WTC11 (cell line): ENCODE measurements at regions of chr19 and their contacts with region 1.

Region 1: GRCh38 chr19:43743022-43743421 is 11.7 kb downstream of the SMG9 start:
- DNase-seq: no peak
- ATAC-seq: no peak
- H3K4me3 Mint-ChIP-seq: no peak overlapping the region
- H3K27ac Mint-ChIP-seq: no peak overlapping the region
- H3K4me1 Mint-ChIP-seq: peaks cover 6% of the 10 kb centered on the region; the same call in 1 of the 2 replicates
- H3K27me3 Mint-ChIP-seq: no peaks in the 10 kb centered on the region
- CTCF ChIP-seq: no peak

Region 2: DNA sequence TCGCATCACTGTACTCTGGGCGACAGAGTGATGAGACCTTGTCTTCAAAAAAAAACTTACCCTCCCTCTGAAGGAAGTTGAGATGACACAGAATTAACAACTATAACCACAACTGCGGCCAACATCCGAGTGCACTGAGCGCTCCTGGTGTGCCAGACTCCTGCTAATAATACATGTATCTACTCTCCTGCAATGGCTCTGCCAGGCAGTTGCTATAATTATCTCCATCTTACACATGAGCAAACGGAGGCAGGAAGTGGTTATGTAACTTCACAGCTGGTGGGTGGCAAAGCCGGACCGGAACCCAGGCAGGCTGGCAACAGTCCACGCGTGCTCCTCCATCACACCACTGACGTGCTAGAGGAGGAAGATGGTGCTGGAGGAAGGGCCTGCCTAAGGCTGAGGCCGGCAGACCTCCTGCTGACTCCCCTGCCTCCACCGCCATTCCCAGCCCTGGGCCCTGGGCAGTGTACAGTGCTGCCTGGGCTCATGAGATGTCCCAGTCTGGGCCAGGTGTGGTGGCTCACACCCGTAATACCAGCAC is 180.3 kb before region 1 on chr19:
- CTCF ChIA-PET with region 1: no interaction called
- POLR2A ChIA-PET with region 1: no interaction called
- DNase-seq: no peak
- ATAC-seq: no peak
- H3K4me3 Mint-ChIP-seq: no peak overlapping the region
- H3K27ac Mint-ChIP-seq: no peak overlapping the region
- H3K4me1 Mint-ChIP-seq: no peaks in the 10 kb centered on the region
- H3K27me3 Mint-ChIP-seq: no peaks in the 10 kb centered on the region
- CTCF ChIP-seq: no peak

Region 3: DNA sequence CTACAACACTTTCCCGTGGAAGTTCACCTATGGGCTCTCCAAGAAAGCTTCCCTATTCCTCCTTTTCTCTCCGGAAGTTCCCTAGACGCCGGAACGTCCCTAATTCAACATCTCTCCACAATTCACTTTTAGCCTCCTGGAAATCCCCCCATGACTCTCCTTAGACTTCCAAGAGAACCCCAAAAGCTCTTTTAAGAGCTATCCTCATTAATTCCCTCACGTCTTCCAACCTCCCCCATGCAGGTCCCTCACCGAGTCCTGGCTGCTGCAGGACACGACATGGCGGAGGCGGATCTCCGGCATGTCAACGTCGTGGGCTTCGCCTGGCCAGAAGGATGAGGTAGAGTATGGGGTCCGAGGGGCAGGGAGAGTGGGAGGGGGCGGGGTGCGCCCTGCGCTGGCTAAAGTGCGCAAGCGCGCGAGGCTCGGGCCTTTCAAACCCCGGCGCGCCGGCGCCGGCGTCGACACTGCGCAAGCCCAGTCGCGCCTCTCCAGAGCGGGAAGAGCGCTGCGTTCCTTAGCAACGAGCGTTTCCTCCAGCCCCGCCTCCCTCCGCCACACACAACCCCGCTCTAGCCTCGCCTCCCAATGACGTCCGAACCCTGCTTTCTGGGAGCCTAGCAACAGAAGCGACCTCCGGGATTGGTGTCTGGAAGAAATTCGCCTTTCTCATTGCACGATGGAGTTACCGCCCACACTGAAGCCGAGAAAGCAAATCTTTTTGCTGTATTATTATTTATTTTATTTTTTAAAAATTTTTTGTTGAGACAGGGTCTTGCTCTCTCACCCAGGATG is 167.7 kb before region 1 on chr19 and contains the starts of genes PINLYP and XRCC1:
- CTCF ChIA-PET with region 1: no interaction called
- POLR2A ChIA-PET with region 1: no interaction called
- DNase-seq: peak; percentile 97
- ATAC-seq: peak; percentile 96
- H3K4me3 Mint-ChIP-seq: peak within 1 kb of the TSS; percentile 96
- H3K27ac Mint-ChIP-seq: peak within 1 kb of the TSS; percentile 91
- H3K4me1 Mint-ChIP-seq: peaks cover 33% of the 10 kb centered on the region
- H3K27me3 Mint-ChIP-seq: no peaks in the 10 kb centered on the region; the same call in none of the 2 replicates
- CTCF ChIP-seq: no peak
- total RNA-seq, gene PINLYP: 6.4 to 11.3 TPM (median 10.6 TPM) in 3 replicates
- total RNA-seq, gene XRCC1: 46.5 to 50.8 TPM (median 48.3 TPM) in 3 replicates

Region 4: GRCh38 chr19:43754503-43755255 is 11.7 kb after region 1 on chr19 and contains the start of gene SMG9:
- CTCF ChIA-PET with region 1: interaction called, 30 read pairs
- POLR2A ChIA-PET with region 1: interaction called, 3 read pairs
- DNase-seq: peak; percentile 97
- ATAC-seq: peak; percentile 87
- H3K4me3 Mint-ChIP-seq: peak within 1 kb of the TSS; percentile 96
- H3K27ac Mint-ChIP-seq: peak within 1 kb of the TSS; percentile 99
- H3K4me1 Mint-ChIP-seq: peaks cover 30% of the 10 kb centered on the region
- H3K27me3 Mint-ChIP-seq: no peaks in the 10 kb centered on the region
- CTCF ChIP-seq: no peak
- total RNA-seq, gene SMG9: 25.7 to 39.6 TPM (median 34.3 TPM) in 3 replicates

Region 5: DNA sequence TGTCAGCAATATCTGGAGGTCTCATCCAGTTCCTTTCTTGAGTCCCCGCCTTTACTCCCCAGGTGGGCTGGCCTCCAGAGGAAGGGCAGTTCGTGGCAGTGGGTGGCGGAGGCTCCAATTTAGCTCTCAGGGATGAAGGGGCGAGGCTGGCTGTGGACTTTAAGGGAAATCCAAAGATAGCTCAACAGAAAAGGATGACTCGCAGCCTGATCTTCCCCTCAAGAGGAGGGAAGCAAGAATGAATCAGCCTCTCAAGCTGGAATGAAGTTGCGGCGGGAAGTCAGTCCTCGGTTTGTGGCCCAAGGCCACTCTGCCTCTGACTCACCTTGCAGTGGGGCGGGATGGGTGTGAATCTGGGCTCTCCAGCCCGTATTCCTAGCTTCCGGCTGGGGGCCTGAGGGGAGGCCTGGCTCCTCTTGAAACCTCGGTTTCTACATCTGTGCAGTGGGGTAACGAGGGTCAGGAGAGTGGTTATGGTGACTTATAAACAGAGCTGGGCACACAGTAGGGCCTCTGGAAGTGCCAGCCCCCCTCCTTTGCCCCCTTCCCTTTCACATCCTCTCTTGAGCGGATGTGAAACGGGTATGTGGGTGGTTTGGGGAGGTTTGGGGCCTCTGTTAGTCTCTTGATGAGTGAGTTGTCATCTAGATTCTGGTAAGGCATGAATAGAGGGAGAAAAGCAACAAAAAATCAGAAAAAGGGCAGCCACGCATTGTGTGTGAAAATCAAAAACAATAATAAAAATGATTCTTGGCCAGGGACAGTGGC is 22.3 kb after region 1 on chr19:
- CTCF ChIA-PET with region 1: interaction called, 31 read pairs
- POLR2A ChIA-PET with region 1: no interaction called
- DNase-seq: no peak
- ATAC-seq: no peak
- H3K4me3 Mint-ChIP-seq: no peak overlapping the region
- H3K27ac Mint-ChIP-seq: no peak overlapping the region
- H3K4me1 Mint-ChIP-seq: peaks cover 9% of the 10 kb centered on the region
- H3K27me3 Mint-ChIP-seq: peaks cover 11% of the 10 kb centered on the region
- CTCF ChIP-seq: no peak

Region 6: DNA sequence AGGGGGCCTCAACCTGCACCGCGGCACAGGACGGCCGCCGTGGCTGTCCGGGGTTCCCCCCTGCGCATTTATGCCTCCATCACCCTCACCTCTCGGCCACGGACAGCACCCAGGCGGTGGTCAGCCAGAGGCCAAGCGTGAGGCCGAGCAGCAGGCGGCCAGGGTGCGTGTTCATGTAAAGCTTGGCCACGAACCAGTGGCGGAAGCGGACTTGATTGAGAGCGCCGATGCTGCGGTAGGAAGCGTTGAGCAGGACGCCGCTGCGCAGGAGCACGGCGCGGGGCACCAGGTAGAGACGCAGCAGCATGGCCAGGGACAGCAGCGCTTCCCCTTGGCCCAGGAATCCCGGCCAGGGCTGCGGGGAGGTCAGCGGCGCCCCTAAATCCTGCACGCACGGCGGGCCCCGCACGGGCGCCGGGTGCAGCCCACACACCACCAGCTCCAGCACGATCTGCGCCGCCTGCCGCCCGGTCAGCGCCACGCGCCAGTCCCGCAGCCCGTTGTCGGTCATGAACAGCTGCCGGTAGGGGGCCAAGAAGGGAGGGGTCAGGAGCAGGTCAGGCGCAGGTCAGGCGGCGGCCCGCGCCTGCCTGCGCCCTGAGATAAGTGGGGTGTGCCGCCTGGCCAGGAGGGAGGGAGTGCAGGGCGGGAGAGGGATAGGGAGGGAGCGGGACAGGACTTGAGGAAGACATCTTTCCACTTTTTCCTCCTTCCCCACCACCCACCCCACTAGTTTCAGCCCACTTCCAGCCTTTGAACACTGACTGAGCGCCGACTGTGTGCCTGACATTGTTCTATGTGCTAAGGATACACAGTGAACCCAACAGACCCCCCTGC is 31.3 kb after region 1 on chr19:
- CTCF ChIA-PET with region 1: interaction called, 19 read pairs
- POLR2A ChIA-PET with region 1: interaction called, 5 read pairs
- DNase-seq: peak; percentile 92
- ATAC-seq: peak; percentile 83
- H3K4me3 Mint-ChIP-seq: peak overlapping the region; percentile 72
- H3K27ac Mint-ChIP-seq: no peak overlapping the region
- H3K4me1 Mint-ChIP-seq: peaks cover 39% of the 10 kb centered on the region
- H3K27me3 Mint-ChIP-seq: peaks cover 75% of the 10 kb centered on the region
- CTCF ChIP-seq: peak; percentile 44

Region 7: GRCh38 chr19:43784981-43785808 is 42.2 kb after region 1 on chr19:
- CTCF ChIA-PET with region 1: interaction called, 24 read pairs
- POLR2A ChIA-PET with region 1: no interaction called
- DNase-seq: peak; percentile 63
- ATAC-seq: peak; percentile 91
- H3K4me3 Mint-ChIP-seq: no peak overlapping the region
- H3K27ac Mint-ChIP-seq: no peak overlapping the region
- H3K4me1 Mint-ChIP-seq: peaks cover 5% of the 10 kb centered on the region; the same call in 1 of the 2 replicates
- H3K27me3 Mint-ChIP-seq: no peaks in the 10 kb centered on the region
- CTCF ChIP-seq: peak; percentile 82

Region 8: DNA sequence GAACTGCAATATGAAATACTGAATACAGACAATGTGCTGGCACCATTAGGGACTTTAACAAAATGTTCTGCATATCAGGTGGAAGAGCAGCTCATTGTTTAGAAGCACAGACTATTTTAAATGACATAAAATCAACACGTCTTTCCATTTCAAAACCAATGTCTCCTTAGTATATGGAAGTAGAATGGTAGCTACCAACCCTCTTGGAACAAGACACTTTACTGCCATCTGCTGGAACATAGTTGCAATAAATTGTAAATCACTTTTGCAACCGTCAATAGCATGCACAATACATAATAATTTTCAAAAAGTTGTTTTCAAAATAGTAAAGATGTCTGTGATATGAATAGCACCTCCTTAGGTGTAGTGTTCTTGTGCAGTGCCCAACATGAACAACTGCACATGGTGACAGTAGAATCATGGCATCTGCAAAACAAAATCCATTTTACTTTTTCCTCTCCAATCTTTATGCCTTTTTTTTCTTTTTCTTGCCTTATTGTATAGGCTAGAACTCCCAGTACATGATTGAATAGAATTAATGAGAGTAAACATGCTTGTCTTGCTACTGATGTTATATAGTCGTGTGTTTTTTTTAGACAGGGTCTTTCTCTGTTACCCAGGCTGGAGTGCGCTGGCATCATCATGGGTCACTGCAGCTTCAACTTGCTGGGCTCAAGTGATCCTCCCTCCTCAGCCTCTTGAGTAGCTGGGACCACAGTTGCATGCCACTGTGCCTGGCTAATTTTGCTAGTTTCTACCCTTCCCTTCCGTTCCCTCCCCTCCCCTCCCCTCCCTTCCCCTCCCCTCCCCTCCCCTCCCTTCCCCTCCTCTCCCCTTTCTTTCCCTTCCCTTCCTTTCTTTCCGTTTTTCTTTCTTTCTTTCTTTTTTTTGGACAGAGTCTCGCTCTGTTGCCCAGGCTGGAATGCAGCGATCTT is 67.0 kb after region 1 on chr19:
- CTCF ChIA-PET with region 1: interaction called, 35 read pairs
- POLR2A ChIA-PET with region 1: no interaction called
- DNase-seq: no peak
- ATAC-seq: peak; percentile 39; the same call in 1 of the 2 replicates
- H3K4me3 Mint-ChIP-seq: no peak overlapping the region
- H3K27ac Mint-ChIP-seq: no peak overlapping the region
- H3K4me1 Mint-ChIP-seq: no peaks in the 10 kb centered on the region
- H3K27me3 Mint-ChIP-seq: peaks cover 23% of the 10 kb centered on the region
- CTCF ChIP-seq: peak; percentile 33